ENCODE measurements at regions of chr4 and their contacts with region 1.

Region 1: DNA sequence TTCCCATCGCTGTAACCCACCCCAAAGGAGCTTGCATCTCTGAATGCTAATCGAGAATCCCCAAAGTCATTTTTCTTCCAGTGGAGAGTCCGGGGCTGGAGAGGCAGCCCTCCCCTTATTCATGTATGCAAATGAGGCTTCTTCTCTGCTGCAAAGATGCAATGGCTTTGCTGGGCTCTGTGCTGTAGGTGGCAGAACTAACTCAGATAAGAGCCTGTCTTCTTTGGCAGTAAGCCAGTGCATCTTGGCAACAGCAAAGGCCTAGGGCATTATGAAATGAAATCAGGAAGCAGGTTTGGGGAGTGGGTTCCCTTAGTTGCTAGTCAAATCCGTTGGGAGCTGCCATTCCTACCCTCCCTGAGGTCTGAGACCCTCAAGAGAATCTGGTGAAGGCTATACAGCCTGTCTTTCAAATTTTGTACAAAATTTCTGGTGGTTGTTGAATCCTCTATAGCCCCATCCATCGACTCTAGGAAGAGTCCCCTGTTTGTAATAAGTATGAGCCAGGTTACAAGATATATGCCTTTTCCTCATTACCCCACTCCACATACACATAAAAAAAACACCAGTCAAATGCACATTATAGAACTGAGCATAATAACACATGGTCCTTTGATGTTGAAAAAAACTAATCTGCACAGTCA is 290.6 kb upstream of the TAPT1 start:
- DNase-seq: peak; percentile 52 to 78
- H3K4me3 ChIP-seq: no peak overlapping the region
- H3K27ac ChIP-seq: peak overlapping the region in 1 of 2 donors; percentile 7
- H3K4me1 ChIP-seq: no peaks in the 10 kb centered on the region
- H3K27me3 ChIP-seq: no peaks in the 10 kb centered on the region
- CTCF ChIP-seq: peak; percentile 47 to 64 (median 54)
- POLR2A ChIP-seq: no peak

Region 2: DNA sequence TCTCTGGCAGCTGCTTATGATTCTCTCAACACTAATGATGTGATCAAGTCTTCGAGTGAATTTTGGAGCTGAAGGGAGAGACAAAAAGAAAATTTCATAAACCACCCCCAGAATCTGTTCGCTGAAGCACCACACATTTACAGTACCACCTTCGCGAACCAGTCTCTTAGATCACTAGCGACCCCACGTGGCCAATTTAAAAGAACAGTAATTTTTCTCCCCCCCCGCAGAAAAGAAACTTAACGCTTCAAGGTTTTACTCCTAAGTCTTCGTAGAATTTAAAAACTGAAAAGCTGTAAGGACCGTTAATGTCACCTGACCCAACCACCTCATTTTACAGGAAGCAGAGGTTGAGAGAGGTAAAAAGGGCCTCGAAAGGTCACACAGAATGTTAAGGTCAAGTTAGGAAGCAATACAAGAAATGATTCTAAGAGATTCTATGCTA is 807.5 kb after region 1 on chr4:
- intact Hi-C with region 1: loop called (anchors 10 kb)
- DNase-seq: peak; percentile 60 to 68
- H3K4me3 ChIP-seq: no peak overlapping the region
- H3K27ac ChIP-seq: peak overlapping the region; percentile 35 to 76
- H3K4me1 ChIP-seq: no peaks in the 10 kb centered on the region
- H3K27me3 ChIP-seq: no peaks in the 10 kb centered on the region
- CTCF ChIP-seq: peak; percentile 69 to 84 (median 78)
- POLR2A ChIP-seq: no peak

Measured in uterus (tissue), 4 donors.